ENCODE measurements at regions of chr3 and their contacts with region 1.

Region 1: GRCh38 chr3:128617557-128618397 is 32.8 kb downstream of the RPN1 start:
- DNase-seq: peak; percentile 65
- H3K4me3 ChIP-seq: peak overlapping the region; percentile 85
- CTCF ChIP-seq: peak; percentile 92

Region 2: GRCh38 chr3:128489855-128490649 is 127.7 kb before region 1 on chr3:
- CTCF ChIA-PET with region 1: no interaction called
- POLR2A ChIA-PET with region 1: no interaction called
- DNase-seq: no peak
- H3K4me3 ChIP-seq: peak overlapping the region; percentile 82
- CTCF ChIP-seq: peak; percentile 4

Region 3: DNA sequence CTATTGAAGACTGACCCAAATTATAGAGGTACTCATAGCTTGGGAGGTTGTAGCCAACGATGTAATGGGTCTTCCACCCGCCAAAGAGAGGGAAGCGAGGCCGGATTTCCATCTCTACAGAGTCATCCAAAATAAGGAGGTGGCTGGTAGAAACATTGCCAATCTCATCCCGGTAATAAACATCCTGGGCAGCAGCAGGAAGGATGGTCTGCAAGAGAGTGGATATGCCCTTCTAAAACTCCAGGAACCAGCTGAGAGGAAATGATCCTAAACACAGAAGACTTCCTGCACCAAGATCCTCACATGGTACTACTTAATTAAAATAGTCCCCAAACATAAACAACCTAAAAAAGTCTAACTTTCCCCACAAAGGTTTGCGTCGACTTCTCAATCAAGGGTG is 12.2 kb after region 1 on chr3:
- CTCF ChIA-PET with region 1: interaction called, 54 read pairs
- POLR2A ChIA-PET with region 1: interaction called, 4 read pairs
- DNase-seq: no peak
- H3K4me3 ChIP-seq: no peak overlapping the region
- CTCF ChIP-seq: no peak

Region 4: GRCh38 chr3:128714887-128715491 is 97.2 kb after region 1 on chr3:
- CTCF ChIA-PET with region 1: no interaction called
- POLR2A ChIA-PET with region 1: no interaction called
- DNase-seq: no peak
- H3K4me3 ChIP-seq: no peak overlapping the region
- CTCF ChIP-seq: no peak

Region 5: DNA sequence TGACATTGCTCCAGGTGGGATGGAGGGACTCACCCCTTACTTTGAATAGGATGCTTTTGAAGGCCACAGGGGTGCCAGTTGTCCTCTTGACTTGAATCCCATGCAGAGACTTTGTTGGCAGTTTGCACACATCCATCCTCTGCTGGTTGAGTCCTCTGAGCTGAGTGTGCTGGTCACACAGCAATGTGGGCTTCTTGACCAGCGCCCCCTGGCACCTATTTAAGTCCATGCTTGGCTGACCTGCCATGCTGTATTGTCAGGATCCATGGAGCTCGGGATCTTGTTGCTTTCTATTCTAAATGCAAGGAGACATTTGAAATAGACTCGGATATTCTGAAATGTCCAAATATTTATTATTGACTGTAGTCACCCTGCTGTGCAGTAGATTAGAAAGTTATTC is 128.0 kb after region 1 on chr3:
- CTCF ChIA-PET with region 1: no interaction called
- POLR2A ChIA-PET with region 1: no interaction called
- DNase-seq: no peak
- H3K4me3 ChIP-seq: no peak overlapping the region
- CTCF ChIP-seq: no peak

Region 6: GRCh38 chr3:128879125-128879969 is 261.6 kb after region 1 on chr3 and contains the start of gene ACAD9:
- CTCF ChIA-PET with region 1: interaction called, 22 read pairs
- POLR2A ChIA-PET with region 1: no interaction called
- DNase-seq: peak; percentile 80
- H3K4me3 ChIP-seq: peak within 1 kb of the TSS; percentile 89
- CTCF ChIP-seq: no peak

Measured in AG04449 (cell line).